PC-9 (cell line): ENCODE measurements at regions of chr12 and their contacts with region 1.

Region 1: GRCh38 chr12:26226629-26227360 is 31.4 kb downstream of the SSPN start:
- DNase-seq: peak in 1 of 2 experiments; percentile 68
- H3K4me3 ChIP-seq: peak overlapping the region; percentile 52; the same call in 1 of the 2 replicates
- H3K27ac ChIP-seq: no peak overlapping the region
- H3K4me1 ChIP-seq: peaks cover 17% of the 10 kb centered on the region; the same call in 1 of the 2 replicates
- H3K27me3 ChIP-seq: no peaks in the 10 kb centered on the region
- CTCF ChIP-seq: no peak

Region 2: DNA sequence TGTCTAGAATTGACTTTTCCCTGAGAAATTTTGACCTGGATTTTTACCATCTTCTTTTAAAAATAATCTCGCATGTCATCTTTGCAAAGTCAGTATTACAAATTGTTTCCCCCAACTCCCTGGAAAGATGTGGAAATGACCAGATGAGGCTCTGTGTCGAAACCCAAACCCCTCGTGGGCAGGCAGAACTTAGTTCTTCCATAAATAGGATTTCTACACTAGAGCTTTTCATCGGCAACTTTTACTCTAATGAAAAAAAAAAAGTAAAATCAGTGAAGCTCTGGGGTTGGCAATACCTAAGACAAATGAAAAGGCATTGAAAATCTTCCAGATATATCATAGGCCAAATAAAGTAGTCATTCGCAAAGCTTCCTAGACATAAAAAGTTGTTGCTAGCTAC is 14.4 kb before region 1 on chr12:
- CTCF ChIA-PET with region 1: no interaction called
- POLR2A ChIA-PET with region 1: interaction called, 11 read pairs
- intact Hi-C with region 1: loop called (anchors 2 kb)
- DNase-seq: no peak
- H3K4me3 ChIP-seq: no peak overlapping the region
- H3K27ac ChIP-seq: no peak overlapping the region
- H3K4me1 ChIP-seq: no peaks in the 10 kb centered on the region
- H3K27me3 ChIP-seq: no peaks in the 10 kb centered on the region
- CTCF ChIP-seq: no peak